ENCODE measurements at regions of chr15 and their contacts with region 1.

Region 1: DNA sequence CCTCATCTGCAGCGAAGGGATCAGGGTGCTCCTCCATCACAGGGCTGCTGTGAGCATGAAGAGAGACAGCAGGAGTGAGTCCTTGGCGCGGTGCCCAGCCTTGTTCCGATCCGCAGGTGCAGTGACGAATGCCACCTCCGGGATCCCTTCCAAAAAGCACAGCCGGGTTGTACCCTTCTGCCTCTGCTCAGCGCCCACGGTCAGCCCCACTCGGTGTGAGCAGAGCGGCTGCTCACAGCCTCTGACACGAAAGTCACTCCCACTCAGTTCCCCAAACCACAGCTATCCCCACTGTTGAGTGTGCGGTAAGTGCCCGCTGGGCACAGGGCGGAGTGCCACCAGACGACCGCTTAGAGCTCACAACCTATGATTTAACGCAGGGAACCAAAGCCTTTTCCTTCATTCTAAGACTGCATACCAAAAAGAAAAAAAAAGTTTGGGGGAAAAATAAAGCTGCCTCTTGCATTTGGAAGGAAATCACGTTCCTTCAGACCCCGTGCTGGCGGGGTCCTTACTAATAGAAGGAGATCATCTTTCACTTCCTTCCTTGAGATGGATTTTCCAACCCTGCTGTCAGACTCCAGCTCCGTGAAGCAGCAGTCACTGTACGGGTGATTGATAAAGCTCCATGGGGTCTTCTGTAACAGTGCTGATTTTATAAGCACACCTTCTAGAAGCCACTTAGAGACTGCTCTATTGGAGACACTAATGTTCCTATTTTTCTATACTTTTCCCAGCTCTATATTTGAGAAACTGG is 34.7 kb upstream of the TUBGCP5 start:
- DNase-seq: peak; percentile 38

Region 2: GRCh38 chr15:23003736-23004135 is 70.3 kb before region 1 on chr15:
- in situ Hi-C with region 1: loop called (anchors 10 kb)
- DNase-seq: no peak

Measured in KBM-7 (cell line).